ENCODE measurements at regions of chr3 and their contacts with region 1.

Region 1: DNA sequence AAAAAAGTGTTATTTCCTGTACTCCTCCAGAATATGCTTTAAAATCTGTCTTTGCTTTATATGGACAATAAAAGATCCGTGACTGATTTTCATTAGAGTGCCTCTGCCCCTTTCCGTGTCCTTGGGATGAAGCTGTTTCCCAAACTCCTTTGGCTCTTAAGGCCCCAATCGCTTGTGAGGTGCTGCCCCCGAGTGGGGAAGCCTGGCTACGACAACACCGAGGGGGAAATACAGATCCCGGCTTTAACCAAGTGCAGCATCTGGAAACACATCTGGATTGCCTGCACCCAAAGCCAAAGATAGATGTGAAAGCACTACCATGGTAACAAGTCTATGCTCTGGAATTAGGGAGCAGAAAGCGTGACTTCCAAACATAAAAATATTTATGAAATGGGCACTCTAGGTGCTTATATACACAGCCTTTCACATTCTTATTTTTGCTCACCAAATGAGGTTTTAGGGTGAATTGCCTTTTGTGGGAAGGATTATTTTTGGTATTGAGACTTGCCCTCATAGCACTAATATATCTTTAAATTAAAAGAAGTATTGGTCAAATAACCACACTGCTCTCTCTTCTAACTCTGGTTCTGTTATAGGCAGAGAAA is 40.6 kb upstream of the ADCY5 start:
- DNase-seq: peak; percentile 73
- H3K4me3 ChIP-seq: peak overlapping the region; percentile 17
- H3K27ac ChIP-seq: peak overlapping the region; percentile 72
- H3K4me1 ChIP-seq: peaks cover 53% of the 10 kb centered on the region
- H3K27me3 ChIP-seq: no peaks in the 10 kb centered on the region
- CTCF ChIP-seq: peak; percentile 91

Region 2: DNA sequence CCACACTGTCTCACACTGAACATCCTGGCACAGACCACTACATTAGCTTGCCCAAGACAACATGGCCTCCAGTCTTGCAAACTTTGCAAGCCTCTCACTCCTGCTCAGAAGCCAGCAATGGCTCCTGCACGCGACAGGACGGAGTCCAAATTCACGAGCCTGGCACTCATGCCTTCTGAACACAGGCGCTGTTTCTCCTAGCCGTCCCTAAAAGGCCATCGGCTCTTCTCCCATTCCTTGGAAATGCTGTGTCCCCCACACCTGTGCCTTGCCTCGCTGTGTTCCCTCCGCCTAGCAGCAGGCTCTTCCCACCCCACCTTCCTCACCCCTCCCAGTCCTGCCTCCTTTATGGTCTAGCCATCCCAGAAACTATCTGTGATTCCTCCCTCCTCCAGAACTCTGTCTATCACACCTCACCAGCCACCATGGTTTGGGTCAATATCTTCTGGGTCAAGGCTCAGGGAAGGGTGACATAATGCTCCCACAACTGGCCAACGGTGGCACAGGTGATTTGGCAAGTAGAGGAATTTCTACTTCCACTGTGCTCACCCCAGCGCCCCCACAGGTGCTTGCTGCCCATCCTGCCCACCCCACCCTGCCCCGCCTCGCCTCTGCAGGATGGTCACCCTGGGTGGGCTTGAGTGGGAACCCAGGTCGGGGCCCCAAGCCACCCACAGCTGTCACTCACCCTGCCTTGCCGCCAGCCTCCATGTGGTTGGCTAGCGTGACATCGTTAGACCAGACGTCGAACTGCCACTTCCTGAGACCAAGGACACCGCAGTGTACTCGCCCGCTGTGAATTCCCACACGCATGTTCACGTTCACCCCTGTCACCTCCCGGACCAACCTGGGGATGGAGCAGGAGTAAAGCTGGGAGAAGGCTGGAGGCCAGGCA is 161.3 kb before region 1 on chr3:
- intact Hi-C with region 1: loop called (anchors 2 kb)
- DNase-seq: peak; percentile 3
- H3K4me3 ChIP-seq: no peak overlapping the region
- H3K27ac ChIP-seq: peak overlapping the region; percentile 87
- H3K4me1 ChIP-seq: peaks cover 97% of the 10 kb centered on the region
- H3K27me3 ChIP-seq: peaks cover 5% of the 10 kb centered on the region
- CTCF ChIP-seq: no peak

Region 3: GRCh38 chr3:123610331-123610730 is 120.8 kb after region 1 on chr3:
- intact Hi-C with region 1: no loop called
- DNase-seq: no peak
- H3K4me3 ChIP-seq: no peak overlapping the region
- H3K27ac ChIP-seq: no peak overlapping the region
- H3K4me1 ChIP-seq: peaks cover 6% of the 10 kb centered on the region
- H3K27me3 ChIP-seq: no peaks in the 10 kb centered on the region
- CTCF ChIP-seq: no peak

Region 4: DNA sequence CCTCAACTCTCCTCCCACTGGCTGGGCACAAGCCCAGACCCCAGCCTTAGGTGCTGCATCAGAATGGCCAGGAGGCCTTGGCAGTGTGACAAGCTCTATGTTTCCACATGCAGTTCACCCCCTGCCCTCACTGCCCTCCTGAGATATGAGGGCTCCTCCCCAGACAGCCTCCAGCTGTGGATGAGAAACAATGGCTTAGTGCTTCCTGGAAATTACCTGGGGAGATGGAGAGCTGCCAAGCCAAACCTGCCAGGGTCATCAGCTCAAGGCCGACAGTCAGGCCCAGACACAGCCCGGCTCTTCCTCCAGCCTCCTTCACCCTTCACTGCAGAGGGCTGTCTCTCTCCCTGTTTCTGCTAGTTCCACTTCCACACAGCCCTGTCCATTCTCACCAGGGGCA is 318.3 kb after region 1 on chr3:
- intact Hi-C with region 1: no loop called
- DNase-seq: no peak
- H3K4me3 ChIP-seq: no peak overlapping the region
- H3K27ac ChIP-seq: no peak overlapping the region
- H3K4me1 ChIP-seq: peaks cover 5% of the 10 kb centered on the region
- H3K27me3 ChIP-seq: no peaks in the 10 kb centered on the region
- CTCF ChIP-seq: no peak